ENCODE measurements at regions of chr7 and their contacts with region 1.

Region 1: DNA sequence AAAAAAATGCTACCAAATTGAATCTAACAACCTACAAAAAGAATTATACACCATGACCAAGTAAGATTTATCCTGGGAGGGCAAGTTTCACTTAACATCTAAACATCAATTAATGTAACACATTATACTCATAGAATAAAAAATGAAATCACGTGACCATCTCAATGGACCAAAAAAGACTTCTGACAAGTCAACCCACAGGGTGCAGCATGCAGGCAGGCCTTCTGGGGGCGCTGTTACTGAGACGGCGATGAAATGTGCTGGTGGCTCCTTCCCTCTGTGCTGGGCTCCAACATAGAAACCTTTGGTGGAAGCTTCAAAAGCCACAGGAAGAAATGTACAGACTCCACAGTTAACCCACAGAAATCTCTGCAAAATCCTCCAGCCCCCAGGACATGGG is 103.1 kb downstream of the INHBA start:
- DNase-seq: no peak
- ATAC-seq: no peak
- H3K4me3 ChIP-seq: no peak overlapping the region
- H3K27ac ChIP-seq: no peak overlapping the region
- H3K4me1 ChIP-seq: no peaks in the 10 kb centered on the region
- H3K27me3 ChIP-seq: no peaks in the 10 kb centered on the region
- CTCF ChIP-seq: no peak
- POLR2A ChIP-seq: no peak
- RAD21 ChIP-seq: no peak

Region 2: GRCh38 chr7:41538810-41539724 is 60.7 kb before region 1 on chr7:
- CTCF ChIA-PET with region 1: no interaction called
- POLR2A ChIA-PET with region 1: no interaction called
- dilution Hi-C with region 1: no loop called
- in situ Hi-C with region 1: no loop called
- intact Hi-C with region 1: loop called (anchors 5 kb)
- DNase-seq: peak; percentile 50
- ATAC-seq: no peak; the same call in 1 of the 2 replicates
- H3K4me3 ChIP-seq: no peak overlapping the region
- H3K27ac ChIP-seq: no peak overlapping the region
- H3K4me1 ChIP-seq: peaks cover 5% of the 10 kb centered on the region
- H3K27me3 ChIP-seq: no peaks in the 10 kb centered on the region
- CTCF ChIP-seq: no peak
- POLR2A ChIP-seq: no peak
- RAD21 ChIP-seq: no peak

Region 3: DNA sequence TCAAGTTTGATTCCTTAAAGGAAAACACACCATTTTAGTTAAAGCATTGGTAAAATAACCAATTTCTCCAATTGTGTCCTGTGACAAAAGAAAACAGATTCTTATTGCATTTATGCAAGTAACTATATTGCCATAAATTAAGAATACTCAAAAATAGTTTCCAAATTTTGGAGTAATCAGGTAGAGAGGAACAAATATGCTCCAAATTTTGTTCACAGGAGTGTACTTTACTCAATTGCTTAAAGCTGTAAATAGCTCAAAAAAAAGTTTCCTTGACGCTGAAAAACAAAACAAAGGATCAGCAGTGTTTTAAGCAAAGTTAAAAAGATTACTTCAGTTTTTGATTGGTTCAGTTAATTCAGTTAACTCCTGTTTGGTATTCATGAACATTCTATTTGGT is 155.3 kb after region 1 on chr7:
- CTCF ChIA-PET with region 1: no interaction called
- POLR2A ChIA-PET with region 1: no interaction called
- dilution Hi-C with region 1: no loop called
- in situ Hi-C with region 1: no loop called
- intact Hi-C with region 1: no loop called
- DNase-seq: no peak
- ATAC-seq: no peak
- H3K4me3 ChIP-seq: no peak overlapping the region
- H3K27ac ChIP-seq: no peak overlapping the region
- H3K4me1 ChIP-seq: no peaks in the 10 kb centered on the region
- H3K27me3 ChIP-seq: no peaks in the 10 kb centered on the region
- CTCF ChIP-seq: no peak
- POLR2A ChIP-seq: no peak
- RAD21 ChIP-seq: no peak

Region 4: GRCh38 chr7:41943094-41943577 is 343.4 kb after region 1 on chr7:
- CTCF ChIA-PET with region 1: no interaction called
- POLR2A ChIA-PET with region 1: no interaction called
- dilution Hi-C with region 1: no loop called
- in situ Hi-C with region 1: no loop called
- intact Hi-C with region 1: no loop called
- DNase-seq: peak; percentile 79
- ATAC-seq: peak; percentile 88
- H3K4me3 ChIP-seq: peak overlapping the region; percentile 23; the same call in 1 of the 2 replicates
- H3K27ac ChIP-seq: peak overlapping the region; percentile 55; the same call in 1 of the 2 replicates
- H3K4me1 ChIP-seq: peaks cover 13% of the 10 kb centered on the region
- H3K27me3 ChIP-seq: no peaks in the 10 kb centered on the region
- CTCF ChIP-seq: peak; percentile 97
- POLR2A ChIP-seq: peak; percentile 63; the same call in 1 of the 2 replicates
- RAD21 ChIP-seq: peak; percentile 99

Region 5: GRCh38 chr7:42426164-42426563 is 826.4 kb after region 1 on chr7:
- CTCF ChIA-PET with region 1: no interaction called
- POLR2A ChIA-PET with region 1: no interaction called
- dilution Hi-C with region 1: no loop called
- in situ Hi-C with region 1: no loop called
- intact Hi-C with region 1: no loop called
- DNase-seq: peak; percentile 21
- ATAC-seq: no peak
- H3K4me3 ChIP-seq: no peak overlapping the region
- H3K27ac ChIP-seq: no peak overlapping the region
- H3K4me1 ChIP-seq: no peaks in the 10 kb centered on the region
- H3K27me3 ChIP-seq: no peaks in the 10 kb centered on the region; the same call in 1 of the 2 replicates
- CTCF ChIP-seq: no peak
- POLR2A ChIP-seq: no peak
- RAD21 ChIP-seq: no peak